Activated naive CD4-positive, alpha-beta T cell treated with anti-CD3 and anti-CD28 coated beads for 36 hours (primary cell): ENCODE measurements at regions of chr1 and their contacts with region 1.

Region 1: GRCh38 chr1:172532700-172533509 is at the start of gene SUCO:
- DNase-seq: peak; percentile 100
- H3K4me3 Mint-ChIP-seq: peak within 1 kb of the TSS; percentile 94
- H3K27ac Mint-ChIP-seq: peak within 1 kb of the TSS; percentile 100
- H3K4me1 Mint-ChIP-seq: peaks cover 39% of the 10 kb centered on the region
- H3K27me3 Mint-ChIP-seq: no peaks in the 10 kb centered on the region
- total RNA-seq, gene SUCO: 23.9 TPM

Region 2: DNA sequence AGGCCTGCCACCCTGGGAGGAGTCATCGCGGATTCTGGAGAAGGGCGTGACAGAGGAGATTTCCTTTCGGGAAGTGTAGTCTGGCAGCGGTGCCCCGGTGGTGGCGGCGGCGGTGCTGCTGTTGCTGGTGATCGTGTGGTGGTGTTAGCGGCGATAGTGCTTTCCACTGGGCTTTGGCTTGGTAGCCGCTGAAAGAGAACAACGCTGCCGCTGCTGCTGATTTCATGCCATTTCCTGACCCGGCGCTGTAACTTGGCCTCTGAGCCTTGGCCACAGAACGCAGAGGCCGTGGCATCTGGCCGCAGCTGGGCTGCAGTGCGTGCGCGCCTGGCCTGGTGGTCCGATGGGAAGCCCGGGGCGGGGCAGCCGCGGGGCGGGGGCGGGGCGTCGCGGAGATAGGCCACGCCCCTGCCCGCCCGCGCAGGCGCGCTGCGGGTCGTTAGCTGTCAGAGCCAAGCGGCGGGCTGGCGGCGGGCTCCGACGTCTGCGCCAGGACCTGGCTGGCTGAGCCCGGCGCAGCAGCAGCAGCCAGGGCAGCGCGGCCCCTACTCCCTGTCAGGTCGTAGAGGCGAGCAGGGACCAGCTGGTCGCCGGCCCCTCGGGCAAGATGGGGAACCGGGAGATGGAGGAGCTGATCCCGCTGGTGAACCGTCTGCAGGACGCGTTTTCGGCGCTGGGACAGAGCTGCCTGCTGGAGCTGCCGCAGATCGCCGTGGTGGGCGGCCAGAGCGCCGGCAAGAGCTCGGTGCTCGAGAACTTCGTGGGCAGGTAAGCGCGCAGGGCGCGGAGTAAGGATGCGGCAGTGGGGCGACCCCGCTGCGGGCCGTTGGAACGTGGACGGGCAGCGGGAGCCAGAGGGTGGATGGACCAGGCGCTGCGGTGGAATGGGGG is 691.6 kb before region 1 on chr1 and contains the start of gene DNM3:
- CTCF ChIA-PET with region 1: no interaction called
- intact Hi-C with region 1: loop called (anchors 1 kb)
- DNase-seq: peak; percentile 66
- H3K4me3 Mint-ChIP-seq: peak within 1 kb of the TSS; percentile 79
- H3K27ac Mint-ChIP-seq: no peak within 1 kb of the TSS
- H3K4me1 Mint-ChIP-seq: peaks cover 14% of the 10 kb centered on the region
- H3K27me3 Mint-ChIP-seq: peaks cover 13% of the 10 kb centered on the region
- total RNA-seq, gene DNM3: 0.96 to 0.98 TPM

Region 3: GRCh38 chr1:172449585-172450534 is 83.0 kb before region 1 on chr1:
- CTCF ChIA-PET with region 1: interaction called, 6 read pairs
- intact Hi-C with region 1: loop called (anchors 1 kb)
- DNase-seq: peak; percentile 53
- H3K4me3 Mint-ChIP-seq: peak overlapping the region; percentile 7
- H3K27ac Mint-ChIP-seq: peak overlapping the region; percentile 26
- H3K4me1 Mint-ChIP-seq: peaks cover 31% of the 10 kb centered on the region
- H3K27me3 Mint-ChIP-seq: no peaks in the 10 kb centered on the region

Region 4: GRCh38 chr1:172662464-172663109 is 129.7 kb after region 1 on chr1:
- CTCF ChIA-PET with region 1: no interaction called
- intact Hi-C with region 1: loop called (anchors 1 kb)
- DNase-seq: peak; percentile 96
- H3K4me3 Mint-ChIP-seq: peak overlapping the region; percentile 26
- H3K27ac Mint-ChIP-seq: peak overlapping the region; percentile 60
- H3K4me1 Mint-ChIP-seq: peaks cover 68% of the 10 kb centered on the region
- H3K27me3 Mint-ChIP-seq: peaks cover 3% of the 10 kb centered on the region

Region 5: GRCh38 chr1:172727956-172728603 is 195.2 kb after region 1 on chr1:
- CTCF ChIA-PET with region 1: interaction called, 6 read pairs
- intact Hi-C with region 1: loop called (anchors 1 kb)
- DNase-seq: peak; percentile 71
- H3K4me3 Mint-ChIP-seq: no peak overlapping the region
- H3K27ac Mint-ChIP-seq: no peak overlapping the region
- H3K4me1 Mint-ChIP-seq: peaks cover 17% of the 10 kb centered on the region
- H3K27me3 Mint-ChIP-seq: no peaks in the 10 kb centered on the region

Region 6: GRCh38 chr1:173824331-173825081 is 1291.6 kb after region 1 on chr1 and contains the starts of genes CENPL and DARS2:
- CTCF ChIA-PET with region 1: no interaction called
- intact Hi-C with region 1: loop called (anchors 1 kb)
- DNase-seq: peak; percentile 95
- H3K4me3 Mint-ChIP-seq: peak within 1 kb of the TSS; percentile 93
- H3K27ac Mint-ChIP-seq: peak within 1 kb of the TSS; percentile 98
- H3K4me1 Mint-ChIP-seq: peaks cover 46% of the 10 kb centered on the region
- H3K27me3 Mint-ChIP-seq: no peaks in the 10 kb centered on the region
- total RNA-seq, gene CENPL: 31.1 to 31.9 TPM
- total RNA-seq, gene DARS2: 42.7 to 44.1 TPM

Region 7: GRCh38 chr1:174159252-174160108 is 1626.6 kb after region 1 on chr1 and contains the start of gene RABGAP1L:
- CTCF ChIA-PET with region 1: no interaction called
- intact Hi-C with region 1: loop called (anchors 2 kb)
- DNase-seq: peak; percentile 94
- H3K4me3 Mint-ChIP-seq: peak within 1 kb of the TSS; percentile 83
- H3K27ac Mint-ChIP-seq: peak within 1 kb of the TSS; percentile 93
- H3K4me1 Mint-ChIP-seq: peaks cover 56% of the 10 kb centered on the region
- H3K27me3 Mint-ChIP-seq: no peaks in the 10 kb centered on the region
- total RNA-seq, gene RABGAP1L: 16.6 TPM